AG04450 (cell line): ENCODE measurements at regions of chr17 and their contacts with region 1.

Region 1: DNA sequence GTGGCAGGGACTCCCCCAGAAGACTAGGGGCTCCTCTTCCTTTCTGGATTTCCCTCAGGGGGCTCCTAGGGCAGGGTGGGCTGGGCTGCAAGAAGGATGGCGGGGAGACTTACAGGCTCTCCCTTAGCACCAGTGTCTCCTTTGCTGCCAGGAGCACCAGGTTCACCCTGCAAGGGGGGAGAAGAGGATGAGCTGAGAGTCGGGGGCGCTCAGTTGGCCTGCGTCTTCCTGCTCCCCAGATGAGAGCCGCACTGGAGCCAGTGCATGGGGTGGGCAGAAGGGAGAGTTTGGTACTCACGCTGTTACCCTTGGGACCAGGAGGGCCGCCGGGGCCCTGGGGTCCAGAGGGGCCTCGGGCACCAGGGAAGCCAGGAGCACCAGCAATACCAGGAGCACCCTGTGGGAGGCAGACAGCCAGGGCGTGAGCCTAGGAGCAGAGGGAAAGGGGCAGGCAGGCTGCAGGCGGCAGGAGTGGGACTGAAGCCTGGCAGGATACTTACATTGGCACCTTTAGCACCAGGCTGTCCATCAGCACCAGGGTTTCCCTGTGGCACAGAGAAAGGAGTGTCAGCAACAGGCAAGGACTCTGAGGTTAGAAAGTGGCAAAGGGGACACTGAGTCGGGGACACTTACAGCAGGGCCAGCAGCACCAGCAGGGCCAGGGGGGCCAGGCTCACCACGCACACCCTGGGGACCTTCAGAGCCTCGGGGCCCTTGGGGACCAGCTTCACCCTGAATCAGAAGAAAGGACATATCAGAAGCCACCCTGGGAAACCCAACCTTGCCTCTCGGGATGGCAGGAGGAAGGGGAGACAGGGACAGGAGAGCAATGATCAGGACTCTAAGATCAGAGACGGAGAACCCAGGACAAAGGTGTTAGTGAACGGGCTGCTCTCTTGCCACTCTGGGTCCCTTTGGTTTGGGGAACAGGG is 6.2 kb downstream of the COL1A1 start:
- DNase-seq: no peak
- H3K4me3 ChIP-seq: peak overlapping the region; percentile 96
- H3K27ac ChIP-seq: peak overlapping the region; percentile 98
- H3K27me3 ChIP-seq: no peaks in the 10 kb centered on the region
- CTCF ChIP-seq: peak; percentile 57

Region 2: GRCh38 chr17:50037321-50038071 is 157.7 kb before region 1 on chr17:
- CTCF ChIA-PET with region 1: no interaction called
- POLR2A ChIA-PET with region 1: no interaction called
- DNase-seq: no peak
- H3K4me3 ChIP-seq: no peak overlapping the region
- H3K27ac ChIP-seq: no peak overlapping the region
- H3K27me3 ChIP-seq: no peaks in the 10 kb centered on the region
- CTCF ChIP-seq: no peak

Region 3: GRCh38 chr17:50101346-50102163 is 93.6 kb before region 1 on chr17:
- CTCF ChIA-PET with region 1: no interaction called
- POLR2A ChIA-PET with region 1: no interaction called
- DNase-seq: no peak
- H3K4me3 ChIP-seq: no peak overlapping the region
- H3K27ac ChIP-seq: no peak overlapping the region
- H3K27me3 ChIP-seq: no peaks in the 10 kb centered on the region
- CTCF ChIP-seq: no peak

Region 4: DNA sequence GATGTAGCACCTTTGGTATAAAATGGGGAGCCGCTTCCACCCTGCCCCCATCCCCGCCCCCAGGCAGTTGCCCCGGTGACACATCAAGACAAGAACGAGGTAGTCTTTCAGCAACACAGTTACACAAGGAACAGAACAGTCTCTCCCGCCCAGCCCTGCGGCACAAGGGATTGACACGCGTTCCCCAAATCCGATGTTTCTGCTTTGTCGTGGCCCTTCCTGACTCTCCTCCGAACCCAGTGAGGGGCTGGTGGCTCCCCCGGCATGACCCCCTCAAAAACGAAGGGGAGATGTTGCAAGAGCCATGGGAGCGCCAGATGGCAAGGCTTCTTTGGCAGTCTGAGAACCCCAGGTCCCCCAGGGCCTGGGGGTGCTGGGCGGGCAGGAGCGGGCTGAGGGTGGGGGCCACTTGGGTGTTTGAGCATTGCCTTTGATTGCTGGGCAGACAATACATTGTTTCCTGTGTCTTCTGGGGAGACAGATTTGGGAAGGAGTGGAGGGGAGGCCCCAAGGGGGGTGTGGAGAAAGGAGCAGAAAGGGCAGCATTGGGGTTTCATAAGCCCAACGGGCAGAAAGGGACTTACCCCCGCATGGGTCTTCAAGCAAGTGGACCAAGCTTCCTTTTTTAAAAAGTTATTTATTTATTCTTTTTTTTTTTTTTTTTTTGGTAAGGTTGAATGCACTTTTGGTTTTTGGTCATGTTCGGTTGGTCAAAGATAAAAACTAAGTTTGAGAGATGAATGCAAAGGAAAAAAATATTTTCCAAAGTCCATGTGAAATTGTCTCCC is 10.4 kb before region 1 on chr17:
- CTCF ChIA-PET with region 1: interaction called, 5 read pairs
- POLR2A ChIA-PET with region 1: interaction called, 97 read pairs
- DNase-seq: no peak
- H3K4me3 ChIP-seq: no peak overlapping the region
- H3K27ac ChIP-seq: peak overlapping the region; percentile 98
- H3K27me3 ChIP-seq: no peaks in the 10 kb centered on the region
- CTCF ChIP-seq: no peak

Region 5: DNA sequence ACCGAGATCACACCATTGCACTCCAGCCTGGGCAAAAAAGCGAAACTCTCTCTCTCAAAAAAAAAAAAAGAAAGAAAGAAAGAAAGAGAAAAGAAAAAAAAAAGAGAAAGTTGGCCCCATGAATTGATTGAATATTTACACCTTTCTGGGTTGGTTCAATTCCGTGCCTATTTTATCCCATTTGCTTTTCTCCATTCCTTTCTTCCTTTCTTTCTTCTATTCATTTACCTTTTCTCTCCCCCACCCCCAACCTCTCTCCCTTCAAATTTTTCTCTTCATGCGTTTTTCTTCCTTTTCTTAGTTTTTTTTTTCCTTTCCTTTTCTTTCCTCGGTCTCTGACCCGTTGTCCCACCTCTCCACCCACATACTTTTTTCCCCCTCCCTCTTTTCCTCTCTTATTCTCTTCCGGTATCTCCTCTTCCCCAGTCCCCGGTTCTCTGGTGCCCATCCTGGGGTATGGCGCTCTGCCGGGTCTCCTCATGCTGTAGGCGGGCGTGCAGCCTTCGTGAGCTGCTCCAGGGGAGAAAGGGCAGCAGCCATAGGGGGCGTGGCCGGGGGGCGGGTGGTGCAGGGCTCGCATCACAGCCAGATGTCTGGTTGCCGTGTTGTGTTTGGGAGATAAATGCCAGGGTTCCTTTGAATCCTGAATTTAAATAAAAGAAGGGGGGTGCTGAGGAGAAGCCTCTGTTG is 11.5 kb after region 1 on chr17:
- CTCF ChIA-PET with region 1: interaction called, 3 read pairs
- POLR2A ChIA-PET with region 1: interaction called, 726 read pairs
- DNase-seq: no peak
- H3K4me3 ChIP-seq: peak overlapping the region; percentile 41
- H3K27ac ChIP-seq: peak overlapping the region; percentile 65
- H3K27me3 ChIP-seq: no peaks in the 10 kb centered on the region
- CTCF ChIP-seq: no peak